ENCODE measurements at regions of chr3 and their contacts with region 1.

Region 1: GRCh38 chr3:123642182-123642956 is 57.5 kb upstream of the HACD2 start:
- DNase-seq: peak; percentile 70
- H3K4me3 Mint-ChIP-seq: no peak overlapping the region
- H3K27ac Mint-ChIP-seq: no peak overlapping the region
- H3K4me1 Mint-ChIP-seq: no peaks in the 10 kb centered on the region
- H3K27me3 Mint-ChIP-seq: no peaks in the 10 kb centered on the region

Region 2: DNA sequence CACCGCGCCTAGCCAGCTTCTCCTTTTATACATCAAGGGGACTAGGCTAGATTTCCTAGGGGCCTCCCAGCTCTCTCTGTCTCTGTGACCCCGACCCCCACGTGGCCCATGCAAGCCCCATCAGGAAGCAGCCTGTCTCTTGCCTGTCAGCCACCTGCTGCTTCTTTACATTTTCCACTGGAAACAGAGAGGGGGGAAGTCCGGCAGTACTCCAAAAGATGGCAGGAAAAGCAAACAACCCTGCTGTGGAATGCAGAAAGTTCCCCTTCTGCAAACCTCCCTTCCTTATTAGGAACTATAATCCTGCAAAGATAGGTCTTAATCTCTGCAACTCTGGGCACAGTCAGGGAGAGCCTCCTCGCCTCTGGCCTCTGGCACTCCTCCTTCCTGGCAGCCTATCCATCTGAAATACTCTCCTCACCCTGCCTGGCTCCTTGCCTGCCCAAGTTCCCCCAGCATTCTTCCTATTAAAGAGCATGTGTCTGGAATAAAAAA is 10.2 kb before region 1 on chr3:
- CTCF ChIA-PET with region 1: no interaction called
- POLR2A ChIA-PET with region 1: no interaction called
- DNase-seq: no peak
- H3K4me3 Mint-ChIP-seq: no peak overlapping the region
- H3K27ac Mint-ChIP-seq: no peak overlapping the region
- H3K4me1 Mint-ChIP-seq: peaks cover 1% of the 10 kb centered on the region
- H3K27me3 Mint-ChIP-seq: no peaks in the 10 kb centered on the region

Region 3: DNA sequence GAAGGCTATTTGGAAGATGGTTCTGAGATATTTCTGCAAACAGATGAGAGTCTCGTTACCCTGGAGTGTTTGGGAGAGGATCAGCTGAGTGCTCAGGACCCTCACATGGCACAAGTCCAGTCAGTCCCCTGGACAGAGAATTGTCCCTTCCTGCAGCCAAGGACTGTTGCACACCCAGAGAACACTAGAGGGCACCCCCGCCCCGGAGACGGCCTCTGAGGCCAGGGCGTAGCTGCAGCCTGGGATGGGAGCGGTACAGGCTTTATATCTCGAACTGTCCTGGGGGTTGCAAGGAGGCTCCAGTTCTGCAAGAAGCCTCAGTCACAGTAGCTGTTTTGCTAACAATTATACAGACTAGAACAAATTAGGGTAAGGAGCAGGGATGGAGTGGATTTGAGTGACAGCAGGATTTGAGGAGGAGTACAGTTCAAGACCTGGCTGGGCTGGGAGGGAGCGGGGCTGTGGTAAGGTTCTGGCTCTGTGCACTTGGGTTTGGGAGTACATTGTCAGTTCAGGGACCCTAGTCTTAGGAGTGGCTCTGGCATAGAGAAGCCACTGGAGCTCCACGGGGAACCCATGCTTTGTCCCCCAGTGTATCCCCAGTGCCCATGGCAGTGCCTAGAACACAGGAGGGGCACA is 10.1 kb after region 1 on chr3:
- CTCF ChIA-PET with region 1: interaction called, 17 read pairs
- POLR2A ChIA-PET with region 1: no interaction called
- DNase-seq: peak; percentile 39
- H3K4me3 Mint-ChIP-seq: no peak overlapping the region
- H3K27ac Mint-ChIP-seq: no peak overlapping the region
- H3K4me1 Mint-ChIP-seq: no peaks in the 10 kb centered on the region
- H3K27me3 Mint-ChIP-seq: no peaks in the 10 kb centered on the region